ENCODE measurements at regions of chr17 and their contacts with region 1.

Region 1: GRCh38 chr17:68255731-68256538 is 8.1 kb downstream of the AMZ2 start:
- DNase-seq: peak in 2 of 4 experiments; percentile 54 to 64
- ATAC-seq: peak; percentile 81
- H3K4me3 ChIP-seq: no peak overlapping the region
- H3K27ac ChIP-seq: peak overlapping the region; percentile 3; the same call in 1 of the 3 replicates
- H3K4me1 ChIP-seq: peaks cover 0 to 13% of the 10 kb centered on the region in 2 experiments; a peak in 3 of 5 replicates
- H3K27me3 ChIP-seq: no peaks in the 10 kb centered on the region
- CTCF ChIP-seq: no peak
- EP300 ChIP-seq: peak; percentile 27; the same call in 1 of the 2 replicates
- POLR2A ChIP-seq: no peak
- RAD21 ChIP-seq: 0 out of 4 replicates have a peak, but pooled peaks of 1 of the 2 experiments have one; percentile 17

Region 2: GRCh38 chr17:68398691-68399637 is 143.0 kb after region 1 on chr17:
- CTCF ChIA-PET with region 1: no interaction called
- POLR2A ChIA-PET with region 1: no interaction called
- in situ Hi-C with region 1: no loop called
- intact Hi-C with region 1: loop called (anchors 10 kb)
- DNase-seq: peak; percentile 68 to 77 (median 76)
- ATAC-seq: peak; percentile 98
- H3K4me3 ChIP-seq: no peak overlapping the region
- H3K27ac ChIP-seq: no peak overlapping the region
- H3K4me1 ChIP-seq: 0 out of 5 replicates have a peak, but pooled peaks cover 0 to 4% of the 10 kb centered on the region in 2 experiments
- H3K27me3 ChIP-seq: peaks cover 17 to 44% of the 10 kb centered on the region in 2 experiments; a peak in 3 of 5 replicates
- CTCF ChIP-seq: peak; percentile 85 to 89 (median 87)
- EP300 ChIP-seq: no peak
- POLR2A ChIP-seq: no peak
- RAD21 ChIP-seq: peak; percentile 78 to 80

Region 3: DNA sequence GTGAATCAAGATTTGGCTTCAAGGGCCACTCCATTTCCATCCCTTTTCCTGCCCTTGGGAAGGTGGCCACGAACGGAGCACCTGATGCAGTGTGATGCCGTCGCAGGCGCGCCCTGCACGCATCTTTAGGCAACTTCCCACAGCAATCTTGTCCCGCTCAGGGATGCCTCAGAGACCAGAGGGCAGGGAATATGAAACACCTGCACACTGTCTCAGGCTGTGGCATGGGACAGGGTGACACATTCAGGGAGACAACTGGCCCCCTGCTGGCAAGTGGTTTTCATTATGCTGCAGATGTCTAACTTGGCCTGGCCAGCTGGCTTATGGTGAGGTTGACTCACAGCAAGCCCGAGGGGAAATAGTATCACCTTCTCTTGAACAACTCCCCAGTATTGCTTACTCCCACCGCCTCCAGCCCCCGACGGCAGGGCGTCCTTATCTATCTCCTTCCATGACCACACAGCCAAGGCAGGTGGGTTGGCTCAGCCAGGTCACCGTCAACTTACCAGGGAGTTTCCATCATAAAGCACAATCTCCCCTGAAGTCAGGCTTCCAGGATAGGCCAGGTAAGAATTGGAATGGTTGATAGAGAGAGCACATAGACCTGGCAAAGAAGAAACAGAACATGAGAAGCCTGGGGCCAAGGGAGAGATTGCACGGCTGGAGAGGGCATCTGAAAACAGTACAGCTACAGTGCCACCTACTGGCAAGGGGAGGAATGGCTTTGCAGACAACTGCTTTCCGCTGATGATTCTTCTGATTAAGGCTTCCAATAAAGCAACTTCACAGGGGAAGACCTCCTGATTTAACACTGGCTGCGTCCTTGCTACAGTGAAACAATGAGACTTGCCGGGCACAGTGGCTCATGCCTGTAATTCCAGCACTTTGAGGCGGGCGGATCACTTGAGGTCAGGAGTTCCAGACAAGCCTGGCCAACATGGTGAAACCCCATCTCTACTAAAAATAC is 180.2 kb after region 1 on chr17:
- CTCF ChIA-PET with region 1: no interaction called
- POLR2A ChIA-PET with region 1: no interaction called
- in situ Hi-C with region 1: no loop called
- intact Hi-C with region 1: loop called (anchors 10 kb)
- DNase-seq: peak; percentile 69 to 87 (median 72)
- ATAC-seq: peak; percentile 79
- H3K4me3 ChIP-seq: no peak overlapping the region
- H3K27ac ChIP-seq: no peak overlapping the region; the same call in 2 of the 3 replicates
- H3K4me1 ChIP-seq: peaks cover 17 to 28% of the 10 kb centered on the region in 2 experiments
- H3K27me3 ChIP-seq: no peaks in the 10 kb centered on the region
- CTCF ChIP-seq: peak; percentile 79 to 93 (median 91)
- EP300 ChIP-seq: 0 out of 2 replicates have a peak, but pooled peaks have one; percentile 6
- POLR2A ChIP-seq: no peak
- RAD21 ChIP-seq: peak; percentile 66 to 76

Region 4: DNA sequence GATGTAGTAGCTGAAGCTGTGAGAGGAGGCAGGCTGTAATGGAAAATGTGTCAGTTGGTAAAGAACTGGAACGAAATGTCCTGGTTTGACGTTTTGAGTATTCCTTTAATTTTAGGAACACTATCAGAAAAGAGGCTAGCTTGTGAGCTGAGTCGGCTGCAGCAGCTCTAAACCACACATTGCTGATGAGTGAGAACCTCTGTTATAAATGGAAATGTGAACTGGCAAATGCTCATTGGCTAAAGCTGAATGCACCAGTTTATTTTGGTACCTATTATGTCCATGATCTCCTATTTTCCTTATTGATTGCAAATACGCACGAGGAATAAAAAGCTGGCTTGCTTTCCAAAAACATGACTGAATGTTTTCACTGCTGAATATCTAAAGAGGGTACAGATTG is 212.4 kb after region 1 on chr17:
- CTCF ChIA-PET with region 1: no interaction called
- POLR2A ChIA-PET with region 1: no interaction called
- in situ Hi-C with region 1: loop called (anchors 5 kb)
- intact Hi-C with region 1: no loop called
- DNase-seq: no peak
- ATAC-seq: no peak
- H3K4me3 ChIP-seq: no peak overlapping the region
- H3K27ac ChIP-seq: no peak overlapping the region
- H3K4me1 ChIP-seq: no peaks in the 10 kb centered on the region
- H3K27me3 ChIP-seq: peaks cover 0 to 12% of the 10 kb centered on the region in 2 experiments; a peak in 1 of 5 replicates
- CTCF ChIP-seq: no peak
- EP300 ChIP-seq: no peak
- POLR2A ChIP-seq: no peak
- RAD21 ChIP-seq: no peak

Region 5: DNA sequence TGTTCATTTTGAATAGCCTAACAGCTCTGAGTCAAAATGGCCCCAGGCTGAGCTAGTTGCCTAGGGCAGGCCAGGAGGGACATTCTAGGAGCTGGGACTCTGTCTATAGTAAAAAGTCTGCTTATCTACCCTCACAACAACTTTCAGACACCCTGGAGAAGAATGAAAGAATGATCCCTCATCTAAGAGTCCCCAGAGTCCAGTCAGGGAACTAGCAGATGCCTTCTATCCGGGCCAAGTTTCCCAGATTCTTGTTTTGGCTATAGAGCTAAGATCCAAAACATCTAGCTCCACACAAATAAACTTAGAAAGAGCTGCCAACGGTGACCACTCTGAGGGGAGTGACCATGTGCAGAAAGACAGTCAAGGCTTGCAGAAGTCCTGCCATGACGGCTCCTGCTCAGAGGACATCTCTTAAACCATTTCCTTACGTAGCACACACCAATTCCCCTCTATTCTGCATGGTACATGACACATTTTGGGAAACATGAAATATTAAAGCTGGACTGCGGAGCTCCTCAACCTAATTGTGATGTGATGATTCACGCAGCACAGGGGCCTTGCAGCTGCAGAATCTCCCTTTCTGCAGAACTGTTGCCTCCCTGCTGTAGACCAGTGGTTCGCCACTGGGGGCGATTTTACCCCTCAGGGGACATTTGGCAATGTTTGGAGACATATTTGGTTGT is 321.0 kb after region 1 on chr17:
- CTCF ChIA-PET with region 1: no interaction called
- POLR2A ChIA-PET with region 1: no interaction called
- in situ Hi-C with region 1: no loop called
- intact Hi-C with region 1: no loop called
- DNase-seq: peak in 1 of 4 experiments; percentile 5
- ATAC-seq: no peak
- H3K4me3 ChIP-seq: no peak overlapping the region
- H3K27ac ChIP-seq: no peak overlapping the region
- H3K4me1 ChIP-seq: no peaks in the 10 kb centered on the region
- H3K27me3 ChIP-seq: peaks cover 7 to 23% of the 10 kb centered on the region in 2 experiments; a peak in 4 of 5 replicates
- CTCF ChIP-seq: peak in 2 of 3 experiments; percentile 16 to 20; a peak in 1 of 6 replicates
- EP300 ChIP-seq: no peak
- POLR2A ChIP-seq: no peak
- RAD21 ChIP-seq: no peak

Region 6: DNA sequence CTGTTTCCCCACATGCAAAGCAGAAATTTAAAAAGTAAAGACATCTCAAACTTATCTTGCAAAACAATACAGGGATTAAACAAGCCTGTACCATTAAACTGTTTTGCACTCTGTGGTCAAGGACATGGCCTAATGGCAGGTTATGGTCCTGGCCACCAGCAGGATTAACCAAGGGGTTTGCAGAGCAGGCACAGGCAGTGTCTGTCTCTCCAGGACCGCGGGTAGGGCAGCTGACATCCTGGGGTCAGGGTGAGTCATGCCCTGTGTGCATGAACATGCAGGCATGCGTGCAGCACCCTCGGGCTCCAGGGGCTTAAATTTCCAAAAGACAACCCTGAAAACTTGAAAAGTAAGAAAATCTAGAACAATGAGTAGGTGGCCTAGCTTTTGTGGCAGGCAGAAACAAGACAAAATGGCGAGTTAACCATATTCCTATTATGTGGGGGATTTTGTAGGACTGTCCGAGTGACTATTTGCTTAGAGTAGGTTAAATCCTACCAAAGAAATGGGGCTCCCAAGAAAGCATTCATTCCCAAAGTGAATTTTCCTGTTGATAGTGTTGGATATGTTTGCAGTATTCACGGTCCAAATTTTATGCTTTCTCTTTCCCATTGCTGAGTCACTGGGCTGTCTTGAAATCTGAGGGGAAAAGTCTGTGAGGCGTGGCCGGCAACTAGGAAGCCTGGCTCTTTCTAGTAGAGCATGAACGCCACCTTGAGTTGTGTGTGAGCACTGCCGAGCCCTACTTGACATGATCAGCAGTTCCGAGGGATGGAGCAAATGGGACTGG is 503.6 kb after region 1 on chr17:
- CTCF ChIA-PET with region 1: no interaction called
- POLR2A ChIA-PET with region 1: no interaction called
- in situ Hi-C with region 1: loop called (anchors 25 kb)
- intact Hi-C with region 1: loop called (anchors 10 kb)
- DNase-seq: peak; percentile 84 to 93 (median 86)
- ATAC-seq: peak; percentile 99
- H3K4me3 ChIP-seq: peak overlapping the region; percentile 23
- H3K27ac ChIP-seq: peak overlapping the region; percentile 63
- H3K4me1 ChIP-seq: peaks cover 3 to 6% of the 10 kb centered on the region in 2 experiments; a peak in 2 of 5 replicates
- H3K27me3 ChIP-seq: no peaks in the 10 kb centered on the region; a peak in 1 of 5 replicates
- CTCF ChIP-seq: peak; percentile 84 to 96 (median 95)
- EP300 ChIP-seq: peak; percentile 3; the same call in 1 of the 2 replicates
- POLR2A ChIP-seq: no peak
- RAD21 ChIP-seq: peak; percentile 90 to 94